ENCODE measurements at regions of chr2 and their contacts with region 1.

Region 1: DNA sequence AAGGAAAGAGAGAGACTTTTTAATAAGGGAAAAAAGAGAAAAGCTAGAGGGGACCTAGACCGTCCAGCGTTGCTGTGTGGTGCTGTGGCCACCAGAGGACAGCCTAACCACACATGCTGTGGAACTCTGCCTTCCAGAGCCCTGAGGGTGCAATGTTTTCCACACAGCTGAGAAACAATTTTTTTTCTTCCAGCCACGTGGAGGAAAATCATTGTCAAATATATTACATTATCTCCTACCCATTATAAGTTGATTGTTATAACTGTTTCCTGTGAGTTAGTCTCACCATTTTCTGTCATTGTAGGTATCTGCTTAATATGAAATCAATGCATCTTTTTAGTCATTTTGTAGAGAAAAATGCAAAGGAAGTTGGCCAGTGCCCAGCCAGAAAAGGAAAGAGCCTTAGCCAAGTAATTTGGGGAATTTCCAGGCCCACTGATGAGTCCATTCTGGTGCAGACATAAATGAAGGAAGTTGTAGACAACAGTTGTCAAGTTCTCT is 5.9 kb upstream of the MRPL19 start:
- DNase-seq: peak; percentile 56
- ATAC-seq: peak; percentile 97
- H3K4me3 ChIP-seq: no peak overlapping the region
- H3K27ac ChIP-seq: no peak overlapping the region
- H3K4me1 ChIP-seq: peaks cover 17% of the 10 kb centered on the region
- H3K27me3 ChIP-seq: no peaks in the 10 kb centered on the region; a peak in 1 of 5 replicates
- CTCF ChIP-seq: peak; percentile 96
- EP300 ChIP-seq: no peak
- POLR2A ChIP-seq: no peak
- RAD21 ChIP-seq: peak; percentile 93

Region 2: GRCh38 chr2:75676464-75676863 is 35.8 kb after region 1 on chr2:
- CTCF ChIA-PET with region 1: interaction called, 71 read pairs
- POLR2A ChIA-PET with region 1: no interaction called
- in situ Hi-C with region 1: loop called (anchors 5 kb)
- intact Hi-C with region 1: loop called (anchors 1 kb)
- DNase-seq: no peak
- ATAC-seq: no peak
- H3K4me3 ChIP-seq: no peak overlapping the region
- H3K27ac ChIP-seq: no peak overlapping the region
- H3K4me1 ChIP-seq: no peaks in the 10 kb centered on the region
- H3K27me3 ChIP-seq: no peaks in the 10 kb centered on the region
- CTCF ChIP-seq: no peak
- EP300 ChIP-seq: no peak
- POLR2A ChIP-seq: no peak
- RAD21 ChIP-seq: no peak

Measured in HepG2 (cell line).